Breast epithelium (tissue), 4 donors: ENCODE measurements at regions of chr4 and their contacts with region 1.

Region 1: GRCh38 chr4:169540774-169541173 is 71.6 kb downstream of the NEK1 start:
- DNase-seq: no peak
- H3K4me3 ChIP-seq: no peak overlapping the region
- H3K27ac ChIP-seq: no peak overlapping the region
- H3K4me1 ChIP-seq: no peaks in the 10 kb centered on the region
- H3K27me3 ChIP-seq: no peaks in the 10 kb centered on the region
- CTCF ChIP-seq: no peak
- POLR2A ChIP-seq: no peak

Region 2: GRCh38 chr4:169283114-169283509 is 257.7 kb before region 1 on chr4:
- intact Hi-C with region 1: no loop called
- DNase-seq: no peak
- H3K4me3 ChIP-seq: no peak overlapping the region
- H3K27ac ChIP-seq: peak overlapping the region in 1 of 2 donors; percentile 12
- H3K4me1 ChIP-seq: no peaks in the 10 kb centered on the region
- H3K27me3 ChIP-seq: no peaks in the 10 kb centered on the region
- CTCF ChIP-seq: no peak
- POLR2A ChIP-seq: no peak

Region 3: GRCh38 chr4:170008371-170008770 is 467.6 kb after region 1 on chr4:
- intact Hi-C with region 1: loop called (anchors 5 kb)
- DNase-seq: no peak
- H3K4me3 ChIP-seq: no peak overlapping the region
- H3K27ac ChIP-seq: peak overlapping the region in 1 of 2 donors; percentile 57
- H3K4me1 ChIP-seq: no peaks in the 10 kb centered on the region
- H3K27me3 ChIP-seq: no peaks in the 10 kb centered on the region
- CTCF ChIP-seq: no peak
- POLR2A ChIP-seq: no peak